GM12878 (cell line): ENCODE measurements at regions of chr5 and their contacts with region 1.

Region 1: GRCh38 chr5:56080375-56081052 is 85.8 kb upstream of the IL6ST start:
- DNase-seq: peak; percentile 98
- ATAC-seq: peak; percentile 82
- H3K4me3 ChIP-seq: no peak overlapping the region
- H3K27ac ChIP-seq: peak overlapping the region; percentile 84
- H3K4me1 ChIP-seq: peaks cover 21% of the 10 kb centered on the region
- H3K27me3 ChIP-seq: no peaks in the 10 kb centered on the region
- CTCF ChIP-seq: no peak
- EP300 ChIP-seq: peak; percentile 83 to 87
- POLR2A ChIP-seq: no peak
- RAD21 ChIP-seq: no peak

Region 2: DNA sequence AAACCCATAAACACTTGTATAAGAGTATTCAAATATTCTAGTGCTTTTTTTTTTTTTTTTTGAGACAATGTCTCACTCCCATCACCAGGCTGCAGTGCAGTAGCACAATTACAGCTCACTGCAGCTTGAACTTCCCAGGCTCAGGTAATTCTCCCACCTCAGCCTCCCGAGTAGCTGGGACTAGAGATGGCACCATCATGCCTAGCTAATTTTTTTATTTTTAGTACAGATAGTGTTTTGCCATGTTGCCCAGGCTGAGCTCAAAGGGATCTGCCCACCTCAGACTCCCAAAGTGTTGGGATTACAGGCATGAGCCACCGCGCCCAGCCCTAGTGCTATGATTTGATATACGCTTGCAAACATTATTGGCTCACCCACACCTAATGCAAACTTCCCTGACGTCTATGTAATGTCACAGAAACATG is 97.5 kb before region 1 on chr5:
- CTCF ChIA-PET with region 1: interaction called, 5 read pairs
- POLR2A ChIA-PET with region 1: interaction called, 5 read pairs
- RAD21 ChIA-PET with region 1: interaction called, 29 read pairs
- SMC1A ChIA-PET with region 1: interaction called, 62 read pairs
- in situ Hi-C with region 1: no loop called
- intact Hi-C with region 1: no loop called
- DNase-seq: no peak
- ATAC-seq: peak; percentile 28
- H3K4me3 ChIP-seq: no peak overlapping the region
- H3K27ac ChIP-seq: no peak overlapping the region
- H3K4me1 ChIP-seq: peaks cover 1% of the 10 kb centered on the region
- H3K27me3 ChIP-seq: no peaks in the 10 kb centered on the region
- CTCF ChIP-seq: peak in 2 of 3 experiments; percentile 14 to 50; a peak in 3 of 6 replicates
- EP300 ChIP-seq: no peak
- POLR2A ChIP-seq: no peak
- RAD21 ChIP-seq: peak; percentile 38

Region 3: DNA sequence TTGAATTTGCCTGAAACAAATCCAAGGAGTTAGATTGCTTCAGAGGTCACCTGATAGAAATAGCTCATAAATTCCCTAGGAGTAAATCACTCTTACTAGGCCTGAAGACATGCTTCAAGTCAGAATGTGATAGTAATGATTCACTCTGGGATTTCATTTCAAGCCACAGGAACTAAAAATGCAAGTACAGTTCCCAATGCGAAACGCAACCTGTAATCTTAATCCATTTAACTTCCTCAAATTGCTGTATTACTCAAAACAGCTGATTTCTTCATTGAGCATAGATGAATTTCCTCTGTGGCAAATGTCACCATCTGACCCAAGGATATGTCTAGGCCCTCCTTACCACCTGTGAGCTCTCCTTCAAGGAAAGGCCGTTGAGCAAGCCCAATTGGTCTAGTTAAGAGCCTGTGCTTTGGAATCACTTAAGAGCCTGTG is 53.6 kb before region 1 on chr5:
- CTCF ChIA-PET with region 1: no interaction called
- POLR2A ChIA-PET with region 1: interaction called, 3 read pairs
- RAD21 ChIA-PET with region 1: interaction called, 4 read pairs
- SMC1A ChIA-PET with region 1: interaction called, 8 read pairs
- in situ Hi-C with region 1: no loop called
- intact Hi-C with region 1: loop called (anchors 2 kb)
- DNase-seq: peak; percentile 89
- ATAC-seq: peak; percentile 83
- H3K4me3 ChIP-seq: no peak overlapping the region
- H3K27ac ChIP-seq: no peak overlapping the region
- H3K4me1 ChIP-seq: peaks cover 19% of the 10 kb centered on the region
- H3K27me3 ChIP-seq: no peaks in the 10 kb centered on the region
- CTCF ChIP-seq: no peak
- EP300 ChIP-seq: peak; percentile 89 to 96
- POLR2A ChIP-seq: no peak
- RAD21 ChIP-seq: no peak

Region 4: GRCh38 chr5:56064984-56065383 is 15.5 kb before region 1 on chr5:
- CTCF ChIA-PET with region 1: interaction called, 24 read pairs
- POLR2A ChIA-PET with region 1: interaction called, 11 read pairs
- RAD21 ChIA-PET with region 1: interaction called, 15 read pairs
- SMC1A ChIA-PET with region 1: interaction called, 68 read pairs
- in situ Hi-C with region 1: no loop called
- intact Hi-C with region 1: loop called (anchors 1 kb)
- DNase-seq: peak; percentile 95
- ATAC-seq: peak; percentile 68
- H3K4me3 ChIP-seq: no peak overlapping the region
- H3K27ac ChIP-seq: peak overlapping the region; percentile 28
- H3K4me1 ChIP-seq: peaks cover 16% of the 10 kb centered on the region
- H3K27me3 ChIP-seq: no peaks in the 10 kb centered on the region
- CTCF ChIP-seq: no peak
- EP300 ChIP-seq: peak in 1 of 2 experiments; percentile 91; a peak in 2 of 4 replicates
- POLR2A ChIP-seq: no peak
- RAD21 ChIP-seq: no peak